Posterior vena cava (tissue), 2 donors: ENCODE measurements at regions of chr11 and their contacts with region 1.

Region 1: GRCh38 chr11:65615229-65615941 is at the start of gene PCNX3:
- DNase-seq: peak; percentile 100
- total RNA-seq, gene PCNX3: 21.3 to 22.6 TPM

Region 2: GRCh38 chr11:65575568-65576231 is 39.7 kb before region 1 on chr11 and contains the start of gene EHBP1L1:
- intact Hi-C with region 1: loop called (anchors 2 to 5 kb)
- DNase-seq: peak; percentile 89
- total RNA-seq, gene EHBP1L1: 190 to 223 TPM

Region 3: GRCh38 chr11:65588199-65589054 is 27.0 kb before region 1 on chr11:
- intact Hi-C with region 1: no loop called
- DNase-seq: peak; percentile 89

Region 4: DNA sequence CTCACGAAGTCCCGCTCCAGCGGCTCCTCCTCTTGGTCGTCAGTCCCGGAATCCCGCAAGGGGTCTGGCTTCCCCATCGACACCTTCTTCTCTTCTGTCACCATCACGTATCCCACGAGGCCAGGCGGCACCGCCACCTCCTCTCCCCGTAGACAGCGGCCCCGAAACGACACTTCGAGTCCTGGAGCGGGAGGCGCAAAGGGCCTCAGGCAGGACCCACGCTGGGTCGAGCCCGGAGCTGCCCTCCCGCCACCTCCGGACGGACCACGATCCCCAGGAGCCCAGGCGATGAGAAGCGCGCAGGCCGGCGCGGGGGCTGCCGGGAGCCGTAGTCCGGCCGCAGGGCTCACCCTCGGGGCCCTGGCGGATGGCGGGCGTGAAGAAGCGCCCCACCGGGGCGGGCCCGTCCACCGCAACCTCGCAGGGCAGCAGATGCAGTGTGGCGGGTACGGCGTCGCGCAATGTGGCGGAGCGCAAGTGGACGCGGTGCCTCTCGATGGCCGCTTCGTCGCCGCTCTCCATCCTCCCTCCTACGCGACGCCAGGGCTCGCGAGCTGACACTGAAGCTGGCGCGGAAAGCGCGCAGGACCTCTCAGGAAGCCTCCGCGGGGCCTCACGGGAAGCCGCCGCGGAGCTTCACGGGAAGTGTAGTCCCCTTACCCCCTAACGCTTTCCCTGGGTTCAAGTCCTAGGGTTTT is 105.0 kb after region 1 on chr11 and contains the start of gene RNASEH2C:
- intact Hi-C with region 1: loop called in 1 of 2 experiments (anchors 1 kb)
- DNase-seq: peak; percentile 95
- total RNA-seq, gene RNASEH2C: 43.7 to 45.0 TPM

Region 5: GRCh38 chr11:65919146-65920033 is 304.0 kb after region 1 on chr11 and contains the start of gene DRAP1:
- intact Hi-C with region 1: no loop called
- DNase-seq: peak; percentile 100
- total RNA-seq, gene DRAP1: 76.0 to 92.2 TPM